ENCODE measurements at regions of chr1 and their contacts with region 1.

Region 1: DNA sequence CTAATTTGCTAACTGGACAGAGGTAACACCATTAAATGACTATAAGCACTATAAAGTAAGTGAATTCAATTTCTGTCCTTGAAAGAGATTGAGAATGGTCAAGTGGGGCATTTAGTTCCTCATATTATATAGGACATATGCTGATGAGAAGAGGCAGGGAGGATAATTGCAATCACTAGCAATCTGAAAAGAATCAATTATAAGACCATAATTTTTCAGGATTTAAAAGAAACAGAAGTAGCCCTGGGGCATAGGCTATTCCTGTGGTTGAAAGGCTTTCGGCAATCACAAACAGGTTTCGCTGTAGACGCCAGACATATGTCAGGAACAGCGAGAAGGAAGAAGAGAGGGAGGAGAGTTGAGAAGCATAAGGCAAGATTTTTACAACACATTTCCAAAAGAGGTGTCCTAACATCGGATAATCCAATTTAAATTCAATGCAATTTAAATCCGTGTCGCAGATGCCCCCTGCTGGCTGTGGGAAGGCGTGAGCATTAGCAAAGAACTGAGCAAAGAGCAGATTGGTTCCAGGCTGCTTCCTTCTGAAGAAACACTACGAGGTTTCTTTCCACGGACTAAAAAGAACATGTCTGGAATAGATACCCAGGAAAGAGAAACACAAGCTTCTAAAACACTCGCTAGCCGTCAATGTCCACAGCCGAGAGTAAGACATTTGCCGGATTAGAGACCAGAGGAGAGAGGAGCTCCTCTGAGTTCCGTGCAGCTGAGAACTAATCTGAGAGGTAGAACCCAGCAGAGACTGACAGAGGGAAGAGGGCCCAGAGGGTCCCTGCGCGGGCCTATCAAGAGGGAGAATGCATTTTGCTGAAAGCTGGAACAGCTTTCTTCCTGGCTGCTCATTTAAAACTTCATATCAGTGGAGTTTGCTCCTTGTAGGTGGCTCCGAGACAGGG is 27.9 kb downstream of the RGS5 start:
- DNase-seq: peak; percentile 23 to 83 (median 68)
- H3K4me3 ChIP-seq: peak overlapping the region in 30 of 59 donors; percentile 0 to 48 (median 32)
- H3K27ac ChIP-seq: peak overlapping the region in 44 of 59 donors; percentile 1 to 82 (median 56)
- H3K27me3 ChIP-seq: no peaks in the 10 kb centered on the region
- CTCF ChIP-seq: peak; percentile 59 to 93 (median 82)

Region 2: GRCh38 chr1:162854245-162854882 is 320.4 kb before region 1 on chr1:
- intact Hi-C with region 1: loop called (anchors 10 kb)
- DNase-seq: peak in 8 of 10 donors; percentile 22 to 83 (median 57)
- H3K4me3 ChIP-seq: no peak overlapping the region
- H3K27ac ChIP-seq: no peak overlapping the region
- H3K27me3 ChIP-seq: no peaks in the 10 kb centered on the region
- CTCF ChIP-seq: peak; percentile 64 to 88 (median 75)

Region 3: DNA sequence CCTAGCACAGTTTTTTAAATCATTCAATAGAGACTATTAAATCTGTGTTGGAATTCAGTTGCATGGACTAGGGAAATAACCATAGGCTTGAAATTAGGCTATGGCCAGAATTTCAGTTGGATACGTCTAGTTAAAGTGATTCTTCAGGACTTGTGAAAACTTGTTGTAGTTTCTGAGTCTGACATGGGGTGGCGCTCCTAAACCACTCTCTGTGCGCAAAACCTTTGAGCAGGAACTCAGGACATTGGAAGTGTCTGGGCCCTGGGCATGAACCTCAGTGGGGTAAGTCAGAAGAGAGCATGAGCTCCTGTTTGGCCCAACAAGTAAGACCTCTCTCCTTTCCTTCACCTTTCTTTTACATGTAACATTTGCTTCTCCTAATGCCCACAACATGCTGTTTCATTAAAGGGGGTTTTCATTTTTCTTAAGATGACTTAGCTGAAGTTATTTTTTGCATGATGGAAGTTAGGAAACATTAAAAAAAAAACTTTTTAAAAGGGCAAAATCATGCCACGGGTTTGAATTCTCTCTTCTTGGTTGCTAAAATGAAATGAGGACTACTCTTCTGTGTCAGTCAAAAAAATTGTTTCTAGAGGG is 296.7 kb before region 1 on chr1:
- intact Hi-C with region 1: loop called in 1 of 2 experiments (anchors 5 kb)
- DNase-seq: peak in 8 of 10 donors; percentile 10 to 79 (median 56)
- H3K4me3 ChIP-seq: no peak overlapping the region
- H3K27ac ChIP-seq: peak overlapping the region in 1 of 59 donors; percentile 11
- H3K27me3 ChIP-seq: no peaks in the 10 kb centered on the region
- CTCF ChIP-seq: peak; percentile 31 to 87 (median 70)

Region 4: GRCh38 chr1:163071405-163072255 is 103.2 kb before region 1 on chr1:
- intact Hi-C with region 1: loop called in 1 of 2 experiments (anchors 10 kb)
- DNase-seq: peak in 7 of 10 donors; percentile 22 to 63 (median 56)
- H3K4me3 ChIP-seq: peak overlapping the region in 58 of 59 donors; percentile 18 to 78 (median 56)
- H3K27ac ChIP-seq: peak overlapping the region in 41 of 59 donors; percentile 1 to 91 (median 67)
- H3K27me3 ChIP-seq: peaks cover 0 to 14% (median 0%) of the 10 kb centered on the region in 45 donors
- CTCF ChIP-seq: peak in 54 of 56 donors; percentile 31 to 73 (median 47)

Region 5: DNA sequence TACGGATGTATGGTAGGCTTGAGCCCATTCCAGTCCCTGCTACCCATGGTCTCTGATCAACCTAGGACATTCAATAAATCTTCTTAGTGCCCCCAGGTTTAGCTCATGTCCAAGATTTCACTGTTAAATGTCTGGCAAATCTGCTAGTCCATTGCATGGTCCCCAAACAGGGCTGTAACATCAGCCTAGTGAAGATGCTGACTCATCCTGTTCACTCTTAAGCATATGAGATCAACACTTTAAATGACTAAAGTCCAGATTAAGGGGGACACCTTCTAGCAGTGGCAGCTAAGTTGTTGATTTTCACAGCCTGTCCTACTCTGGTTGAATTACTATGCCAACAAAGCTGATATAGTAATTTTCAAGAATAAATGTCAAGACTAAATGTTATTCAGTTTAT is 100.4 kb after region 1 on chr1:
- intact Hi-C with region 1: no loop called
- DNase-seq: no peak
- H3K4me3 ChIP-seq: no peak overlapping the region
- H3K27ac ChIP-seq: no peak overlapping the region
- H3K27me3 ChIP-seq: no peaks in the 10 kb centered on the region
- CTCF ChIP-seq: no peak

Measured in dorsolateral prefrontal cortex (tissue), 120 donors.